Naive thymus-derived CD4-positive, alpha-beta T cell (primary cell): ENCODE measurements at regions of chr1 and their contacts with region 1.

Region 1: GRCh38 chr1:243806310-243806709 is 43.7 kb downstream of the AKT3 start:
- DNase-seq: peak in 3 of 9 donors; percentile 7 to 17 (median 10)
- ATAC-seq: no peak
- H3K4me3 ChIP-seq: no peak overlapping the region
- H3K4me3 Mint-ChIP-seq: peak overlapping the region in 4 of 10 donors; percentile 21 to 87 (median 60)
- H3K27ac ChIP-seq: no peak overlapping the region
- H3K27ac Mint-ChIP-seq: peak overlapping the region in 8 of 9 donors; percentile 14 to 95 (median 40)
- H3K4me1 ChIP-seq: peaks cover 0 to 20% of the 10 kb centered on the region in 2 donors
- H3K4me1 Mint-ChIP-seq: peaks cover 40 to 90% (median 76%) of the 10 kb centered on the region in 7 donors
- H3K27me3 ChIP-seq: no peaks in the 10 kb centered on the region
- H3K27me3 Mint-ChIP-seq: no peaks in the 10 kb centered on the region

Region 2: GRCh38 chr1:243770860-243771259 is 35.5 kb before region 1 on chr1:
- CTCF ChIA-PET with region 1: no interaction called
- POLR2A ChIA-PET with region 1: no interaction called
- intact Hi-C with region 1: loop called in 1 of 2 experiments (anchors 5 kb)
- DNase-seq: no peak
- ATAC-seq: no peak
- H3K4me3 ChIP-seq: no peak overlapping the region
- H3K4me3 Mint-ChIP-seq: no peak overlapping the region
- H3K27ac ChIP-seq: no peak overlapping the region
- H3K27ac Mint-ChIP-seq: peak overlapping the region in 1 of 9 donors; percentile 32
- H3K4me1 ChIP-seq: no peaks in the 10 kb centered on the region
- H3K4me1 Mint-ChIP-seq: peaks cover 0 to 62% (median 39%) of the 10 kb centered on the region in 7 donors
- H3K27me3 ChIP-seq: no peaks in the 10 kb centered on the region
- H3K27me3 Mint-ChIP-seq: no peaks in the 10 kb centered on the region

Region 3: DNA sequence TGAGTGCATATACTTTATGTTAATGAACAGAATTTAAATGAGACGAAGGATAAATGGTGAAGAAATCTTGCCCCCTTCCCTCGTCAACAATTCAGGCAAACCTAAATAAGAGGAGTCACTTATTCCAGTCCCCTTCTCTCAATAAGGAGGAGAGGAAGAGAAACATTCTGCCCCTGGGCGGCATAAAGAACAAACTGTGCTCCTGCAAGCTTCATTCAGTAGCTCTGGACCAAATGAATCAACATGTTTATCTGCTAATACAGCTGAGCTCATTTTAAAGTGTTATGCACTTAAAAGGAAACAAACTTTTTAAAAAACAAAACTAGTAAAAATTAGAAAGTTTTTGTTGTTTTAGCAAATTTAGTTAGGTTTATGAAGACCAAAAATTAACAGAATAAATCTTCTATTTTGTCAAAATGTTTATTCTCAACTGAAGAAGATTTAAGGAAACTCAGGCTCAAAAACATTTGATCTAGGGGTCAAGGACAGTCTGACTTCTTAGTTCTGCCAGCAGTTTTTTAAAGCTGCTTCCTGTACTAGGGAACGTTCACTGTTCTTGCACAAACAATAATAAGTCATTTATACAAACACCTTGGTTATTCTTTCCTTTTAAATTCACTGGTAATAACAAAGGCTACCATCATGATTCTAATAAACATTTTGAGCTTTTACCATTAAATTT is 14.6 kb before region 1 on chr1:
- CTCF ChIA-PET with region 1: no interaction called
- POLR2A ChIA-PET with region 1: interaction called, 4 read pairs
- intact Hi-C with region 1: loop called in 1 of 2 experiments (anchors 2 kb)
- DNase-seq: no peak
- ATAC-seq: no peak
- H3K4me3 ChIP-seq: no peak overlapping the region
- H3K4me3 Mint-ChIP-seq: peak overlapping the region in 2 of 10 donors; percentile 8 to 24
- H3K27ac ChIP-seq: no peak overlapping the region
- H3K27ac Mint-ChIP-seq: peak overlapping the region in 2 of 9 donors; percentile 48 to 54
- H3K4me1 ChIP-seq: peaks cover 3 to 14% of the 10 kb centered on the region in 2 donors
- H3K4me1 Mint-ChIP-seq: peaks cover 5 to 88% (median 73%) of the 10 kb centered on the region in 7 donors
- H3K27me3 ChIP-seq: no peaks in the 10 kb centered on the region
- H3K27me3 Mint-ChIP-seq: no peaks in the 10 kb centered on the region